ENCODE measurements at regions of chr7 and their contacts with region 1.

Region 1: GRCh38 chr7:93551063-93551904 is 23.2 kb downstream of the CALCR start:
- DNase-seq: no peak
- H3K4me3 ChIP-seq: no peak overlapping the region
- H3K27ac ChIP-seq: no peak overlapping the region
- H3K4me1 ChIP-seq: no peaks in the 10 kb centered on the region
- H3K27me3 ChIP-seq: no peaks in the 10 kb centered on the region
- CTCF ChIP-seq: peak in 1 of 4 experiments; percentile 17
- EP300 ChIP-seq: no peak
- POLR2A ChIP-seq: no peak

Region 2: DNA sequence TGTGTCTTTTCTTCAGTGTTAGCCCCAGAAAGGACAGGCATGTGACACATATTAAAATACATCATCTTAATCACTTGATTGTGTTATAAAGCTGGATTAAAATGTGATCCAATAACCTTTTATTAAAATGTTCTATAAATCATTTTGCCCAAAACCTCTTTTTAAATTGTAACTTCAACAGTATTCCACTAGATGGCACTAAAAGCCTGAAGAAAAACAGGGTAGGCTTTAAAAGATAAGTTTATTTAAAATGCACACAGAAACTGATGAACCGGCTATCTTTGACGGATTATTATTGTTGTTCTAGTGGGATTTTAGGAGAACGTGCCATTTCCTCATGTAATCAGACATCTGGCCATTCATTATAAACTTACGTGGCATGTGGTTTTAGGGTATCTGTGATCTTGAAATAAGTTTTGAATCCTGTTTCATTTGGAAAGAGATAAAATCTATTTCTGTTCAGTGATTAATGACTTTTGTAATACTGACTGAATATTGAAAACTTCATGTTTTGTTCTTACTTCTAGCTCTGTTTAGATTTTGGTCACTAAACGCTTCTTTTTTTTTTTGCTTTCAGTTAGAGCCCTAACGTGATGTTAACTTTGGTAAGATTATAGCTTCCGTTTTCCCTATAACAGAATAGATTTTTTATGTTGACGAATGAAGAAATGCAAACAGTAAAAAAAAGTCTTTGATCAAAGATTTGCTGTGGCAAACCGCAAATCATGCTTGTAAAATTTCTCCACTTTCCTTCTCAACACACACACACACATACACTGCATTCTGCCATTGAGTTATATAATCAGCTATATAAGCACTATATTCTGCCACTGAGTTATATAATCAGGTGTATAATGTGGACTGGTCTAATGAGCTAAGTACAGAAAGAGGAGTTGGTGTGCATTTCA is 305.5 kb before region 1 on chr7:
- intact Hi-C with region 1: loop called (anchors 5 kb)
- DNase-seq: no peak
- H3K4me3 ChIP-seq: peak overlapping the region in 3 of 4 donors; percentile 16 to 29 (median 27)
- H3K27ac ChIP-seq: no peak overlapping the region
- H3K4me1 ChIP-seq: peaks cover 0 to 9% (median 2%) of the 10 kb centered on the region in 4 donors
- H3K27me3 ChIP-seq: no peaks in the 10 kb centered on the region
- CTCF ChIP-seq: peak in 3 of 4 experiments; percentile 26 to 63 (median 53)
- EP300 ChIP-seq: no peak
- POLR2A ChIP-seq: no peak

Region 3: DNA sequence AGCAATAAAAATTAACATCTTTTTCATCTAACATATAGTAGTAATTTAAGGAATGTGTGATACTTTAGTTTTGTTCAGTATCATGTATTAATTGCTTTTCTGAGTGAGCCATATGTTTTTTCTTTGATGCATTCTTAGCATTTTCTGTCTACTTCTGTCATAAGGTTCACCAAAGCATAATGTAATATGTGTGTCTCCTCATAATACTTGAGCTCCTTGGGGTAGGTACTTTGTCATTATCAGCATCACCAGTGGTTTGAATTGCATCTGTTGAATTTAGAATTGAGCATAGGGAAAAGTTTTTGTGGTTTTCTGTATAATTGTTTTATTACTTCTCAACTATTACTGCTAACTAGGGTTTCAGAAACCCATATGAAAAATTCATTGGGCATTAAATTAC is 292.6 kb before region 1 on chr7:
- intact Hi-C with region 1: no loop called
- DNase-seq: no peak
- H3K4me3 ChIP-seq: no peak overlapping the region
- H3K27ac ChIP-seq: no peak overlapping the region
- H3K4me1 ChIP-seq: no peaks in the 10 kb centered on the region
- H3K27me3 ChIP-seq: no peaks in the 10 kb centered on the region
- CTCF ChIP-seq: no peak
- EP300 ChIP-seq: no peak
- POLR2A ChIP-seq: no peak

Region 4: GRCh38 chr7:93516834-93517233 is 34.5 kb before region 1 on chr7:
- intact Hi-C with region 1: no loop called
- DNase-seq: no peak
- H3K4me3 ChIP-seq: no peak overlapping the region
- H3K27ac ChIP-seq: no peak overlapping the region
- H3K4me1 ChIP-seq: no peaks in the 10 kb centered on the region
- H3K27me3 ChIP-seq: no peaks in the 10 kb centered on the region
- CTCF ChIP-seq: no peak
- EP300 ChIP-seq: no peak
- POLR2A ChIP-seq: no peak

Measured in sigmoid colon (tissue), 7 donors.